CD4-positive, alpha-beta memory T cell (primary cell): ENCODE measurements at regions of chr6 and their contacts with region 1.

Region 1: GRCh38 chr6:30508890-30509736 is 19.8 kb downstream of the HLA-E start:
- DNase-seq: peak; percentile 72 to 85 (median 82)
- H3K4me3 ChIP-seq: peak overlapping the region; percentile 1 to 26
- H3K4me3 Mint-ChIP-seq: peak overlapping the region; percentile 66 to 86 (median 80)
- H3K27ac ChIP-seq: peak overlapping the region; percentile 32
- H3K27ac Mint-ChIP-seq: peak overlapping the region; percentile 78 to 96 (median 89)
- H3K4me1 ChIP-seq: peaks cover 77% of the 10 kb centered on the region
- H3K4me1 Mint-ChIP-seq: peaks cover 38 to 73% (median 52%) of the 10 kb centered on the region in 4 donors
- H3K27me3 ChIP-seq: no peaks in the 10 kb centered on the region
- H3K27me3 Mint-ChIP-seq: no peaks in the 10 kb centered on the region

Region 2: GRCh38 chr6:30489081-30490025 is 19.8 kb before region 1 on chr6 and contains the start of gene HLA-E:
- CTCF ChIA-PET with region 1: interaction called, 18 read pairs
- POLR2A ChIA-PET with region 1: interaction called, 743 read pairs
- intact Hi-C with region 1: loop called (anchors 1 kb)
- DNase-seq: peak; percentile 92 to 98 (median 96)
- H3K4me3 ChIP-seq: peak within 1 kb of the TSS; percentile 98 to 99
- H3K4me3 Mint-ChIP-seq: peak within 1 kb of the TSS; percentile 98 to 99 (median 99)
- H3K27ac ChIP-seq: peak within 1 kb of the TSS; percentile 95
- H3K27ac Mint-ChIP-seq: peak within 1 kb of the TSS; percentile 97 to 99 (median 99)
- H3K4me1 ChIP-seq: peaks cover 30% of the 10 kb centered on the region
- H3K4me1 Mint-ChIP-seq: peaks cover 28 to 60% (median 44%) of the 10 kb centered on the region in 4 donors
- H3K27me3 ChIP-seq: no peaks in the 10 kb centered on the region
- H3K27me3 Mint-ChIP-seq: no peaks in the 10 kb centered on the region
- total RNA-seq, gene HLA-E: 1,097 to 1,122 TPM